Naive thymus-derived CD8-positive, alpha-beta T cell (primary cell): ENCODE measurements at regions of chr1 and their contacts with region 1.

Region 1: DNA sequence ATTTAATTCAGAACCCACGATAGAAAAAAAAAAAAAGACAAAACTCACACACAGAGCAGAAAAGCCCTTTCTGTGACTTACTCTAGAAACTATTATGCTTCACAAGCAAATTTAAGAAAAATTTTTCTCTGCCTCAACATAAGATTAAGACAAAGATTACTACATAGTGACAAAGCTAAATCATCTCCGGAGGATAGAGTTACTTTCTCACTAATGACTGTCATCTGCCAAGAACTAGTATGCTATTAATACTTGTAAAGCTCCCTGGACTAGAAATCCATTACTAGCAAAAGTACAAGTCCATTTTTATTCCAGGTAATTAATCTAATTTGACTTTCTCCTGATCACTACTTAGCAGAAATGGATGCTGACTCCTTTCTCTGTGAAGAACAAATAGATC is 25.9 kb downstream of the GREM2 start:
- DNase-seq: no peak
- ATAC-seq: no peak
- H3K4me3 Mint-ChIP-seq: no peak overlapping the region
- H3K27ac Mint-ChIP-seq: peak overlapping the region in 1 of 10 donors; percentile 11
- H3K4me1 Mint-ChIP-seq: peaks cover 0 to 5% (median 0%) of the 10 kb centered on the region in 4 donors
- H3K27me3 Mint-ChIP-seq: no peaks in the 10 kb centered on the region

Region 2: GRCh38 chr1:240441684-240442083 is 144.3 kb before region 1 on chr1:
- POLR2A ChIA-PET with region 1: interaction called, 11 read pairs
- DNase-seq: no peak
- ATAC-seq: no peak
- H3K4me3 Mint-ChIP-seq: no peak overlapping the region
- H3K27ac Mint-ChIP-seq: no peak overlapping the region
- H3K4me1 Mint-ChIP-seq: no peaks in the 10 kb centered on the region
- H3K27me3 Mint-ChIP-seq: peaks cover 0 to 8% (median 2%) of the 10 kb centered on the region in 5 donors

Region 3: DNA sequence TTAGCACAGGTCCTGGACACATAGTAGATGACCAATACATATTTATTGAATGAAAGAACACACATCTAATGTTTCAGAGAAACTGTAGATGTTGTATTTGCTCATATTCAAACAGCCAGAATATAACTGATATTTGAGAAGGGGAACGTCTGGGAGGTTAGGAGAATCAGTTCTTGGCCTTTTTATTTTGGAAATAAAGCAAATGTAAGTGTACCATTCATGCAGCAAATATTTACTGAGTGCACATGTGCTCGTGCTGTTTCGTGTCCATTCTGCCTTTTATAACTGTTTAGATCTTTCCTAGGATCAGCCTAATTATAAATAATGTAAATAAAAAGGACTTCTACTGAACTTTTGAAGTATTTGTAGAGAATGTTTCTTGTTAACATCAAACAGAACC is 77.8 kb before region 1 on chr1:
- POLR2A ChIA-PET with region 1: no interaction called
- DNase-seq: no peak
- ATAC-seq: no peak
- H3K4me3 Mint-ChIP-seq: no peak overlapping the region
- H3K27ac Mint-ChIP-seq: no peak overlapping the region
- H3K4me1 Mint-ChIP-seq: no peaks in the 10 kb centered on the region
- H3K27me3 Mint-ChIP-seq: peaks cover 4 to 16% (median 8%) of the 10 kb centered on the region in 5 donors

Region 4: GRCh38 chr1:240621231-240621810 is 35.3 kb after region 1 on chr1:
- POLR2A ChIA-PET with region 1: interaction called, 13 read pairs
- DNase-seq: no peak
- ATAC-seq: no peak
- H3K4me3 Mint-ChIP-seq: no peak overlapping the region
- H3K27ac Mint-ChIP-seq: no peak overlapping the region
- H3K4me1 Mint-ChIP-seq: no peaks in the 10 kb centered on the region
- H3K27me3 Mint-ChIP-seq: peaks cover 0 to 3% (median 3%) of the 10 kb centered on the region in 5 donors